ENCODE measurements at regions of chr13 and their contacts with region 1.

Region 1: DNA sequence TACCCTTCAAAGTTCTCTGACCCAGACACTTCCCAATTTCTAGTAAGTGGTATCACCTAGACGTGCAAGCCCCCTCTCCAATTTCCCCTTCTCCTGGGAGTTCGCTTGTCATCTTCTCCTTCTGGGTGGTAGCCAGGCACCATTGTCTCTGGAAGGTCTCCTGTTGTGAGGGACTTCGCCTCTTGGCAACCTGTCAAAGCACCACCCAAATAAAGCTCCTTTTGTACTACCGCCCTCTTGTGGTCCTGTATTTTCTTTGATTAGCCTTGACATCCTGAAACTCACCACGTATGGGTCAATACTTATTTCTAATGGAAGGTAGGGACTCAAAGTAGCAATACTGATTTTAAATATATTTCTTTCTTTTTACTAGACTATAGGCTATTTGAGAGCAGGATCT is 8.2 kb downstream of the GPC5 start:
- DNase-seq: peak; percentile 35
- ATAC-seq: peak; percentile 46
- H3K4me3 ChIP-seq: no peak overlapping the region
- H3K27ac ChIP-seq: no peak overlapping the region
- H3K4me1 ChIP-seq: no peaks in the 10 kb centered on the region
- H3K27me3 ChIP-seq: peaks cover 2% of the 10 kb centered on the region
- CTCF ChIP-seq: peak; percentile 56
- POLR2A ChIP-seq: no peak
- RAD21 ChIP-seq: peak; percentile 52

Region 2: DNA sequence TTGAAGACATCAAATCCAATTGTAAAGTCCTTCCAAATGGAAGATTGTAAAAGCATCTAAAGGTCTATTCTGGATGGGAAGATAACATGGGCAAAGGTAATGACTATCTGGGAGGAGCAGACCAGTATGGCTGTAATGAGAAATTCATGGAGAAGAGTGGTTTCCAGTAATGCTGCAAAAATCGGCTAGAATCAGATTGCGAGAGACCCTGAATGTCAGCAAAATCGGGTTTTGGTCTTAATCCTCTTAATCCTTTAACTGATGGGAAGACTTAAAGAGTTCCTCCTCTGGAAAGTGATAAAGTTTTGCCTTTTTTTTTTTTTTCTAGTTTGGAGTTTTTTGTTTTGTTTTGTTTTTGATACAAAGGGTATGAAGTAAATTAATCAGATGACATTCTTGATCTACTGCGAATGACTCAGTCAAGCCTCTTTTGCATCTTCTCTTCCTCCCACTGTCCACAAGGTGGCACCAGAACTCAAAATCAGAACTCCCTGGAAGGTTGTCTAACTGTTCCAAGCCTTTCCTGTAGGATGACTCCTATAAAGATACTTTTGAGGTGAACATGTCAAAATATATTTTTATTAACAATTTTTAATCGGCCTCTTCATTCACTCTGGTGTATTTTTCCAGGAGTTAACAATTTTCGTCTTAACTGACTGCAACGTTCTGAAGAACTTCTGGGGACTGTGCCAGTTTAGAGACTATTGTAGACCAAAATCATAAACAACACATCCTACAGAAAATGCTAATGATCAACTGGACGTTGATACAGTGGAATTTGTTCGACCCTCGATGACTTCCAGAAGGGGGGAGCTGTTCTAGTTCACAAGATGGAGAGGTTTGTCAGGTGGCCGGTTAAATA is 272.4 kb before region 1 on chr13:
- CTCF ChIA-PET with region 1: no interaction called
- POLR2A ChIA-PET with region 1: no interaction called
- dilution Hi-C with region 1: no loop called
- in situ Hi-C with region 1: no loop called
- intact Hi-C with region 1: loop called (anchors 2 kb)
- DNase-seq: peak; percentile 54
- ATAC-seq: peak; percentile 59
- H3K4me3 ChIP-seq: no peak overlapping the region
- H3K27ac ChIP-seq: no peak overlapping the region
- H3K4me1 ChIP-seq: no peaks in the 10 kb centered on the region
- H3K27me3 ChIP-seq: no peaks in the 10 kb centered on the region
- CTCF ChIP-seq: peak; percentile 69
- POLR2A ChIP-seq: no peak
- RAD21 ChIP-seq: peak; percentile 57

Region 3: GRCh38 chr13:91375116-91375729 is 31.4 kb before region 1 on chr13:
- CTCF ChIA-PET with region 1: no interaction called
- POLR2A ChIA-PET with region 1: no interaction called
- dilution Hi-C with region 1: no loop called
- in situ Hi-C with region 1: no loop called
- intact Hi-C with region 1: loop called (anchors 2 kb)
- DNase-seq: peak; percentile 8
- ATAC-seq: peak; percentile 71; the same call in 1 of the 2 replicates
- H3K4me3 ChIP-seq: no peak overlapping the region
- H3K27ac ChIP-seq: no peak overlapping the region
- H3K4me1 ChIP-seq: no peaks in the 10 kb centered on the region
- H3K27me3 ChIP-seq: no peaks in the 10 kb centered on the region
- CTCF ChIP-seq: peak; percentile 49
- POLR2A ChIP-seq: no peak
- RAD21 ChIP-seq: peak; percentile 55